ENCODE measurements at regions of chr16 and their contacts with region 1.

Region 1: DNA sequence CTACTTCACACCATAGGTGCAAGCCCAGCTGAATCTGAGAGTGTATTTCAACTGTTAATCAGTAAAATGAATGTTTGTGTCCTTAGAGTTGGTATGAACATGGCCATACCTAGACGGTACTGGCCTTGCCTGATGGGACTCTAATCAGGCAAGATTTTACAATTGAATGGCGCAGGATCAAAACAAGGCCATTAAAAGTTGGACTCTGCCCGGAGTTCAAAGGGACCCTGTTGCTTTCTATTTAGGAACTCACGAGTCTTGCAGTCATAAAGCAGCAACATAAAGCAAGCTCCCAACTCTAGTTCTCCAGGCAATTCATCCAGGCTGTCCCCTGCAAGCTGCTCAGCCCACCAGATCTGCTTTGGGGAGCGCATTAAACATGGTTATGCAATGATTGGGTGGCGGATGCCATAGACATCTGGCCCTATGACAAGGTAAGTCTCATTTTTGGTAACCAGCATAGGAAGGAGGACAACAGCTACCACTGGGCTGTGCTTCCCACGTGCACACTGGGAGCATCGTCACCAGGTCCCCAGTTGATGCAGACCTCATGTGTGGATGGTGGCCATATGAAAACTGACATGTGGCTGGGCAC is 8.8 kb downstream of the TMEM186 start:
- DNase-seq: no peak
- ATAC-seq: no peak
- H3K4me3 Mint-ChIP-seq: no peak overlapping the region
- H3K27ac Mint-ChIP-seq: no peak overlapping the region
- H3K4me1 Mint-ChIP-seq: peaks cover 5% of the 10 kb centered on the region
- H3K27me3 Mint-ChIP-seq: no peaks in the 10 kb centered on the region
- CTCF ChIP-seq: no peak

Region 2: GRCh38 chr16:9123871-9124270 is 335.2 kb after region 1 on chr16:
- CTCF ChIA-PET with region 1: no interaction called
- POLR2A ChIA-PET with region 1: interaction called, 11 read pairs
- intact Hi-C with region 1: no loop called
- DNase-seq: peak; percentile 55
- ATAC-seq: peak; percentile 91
- H3K4me3 Mint-ChIP-seq: peak overlapping the region; percentile 64
- H3K27ac Mint-ChIP-seq: peak overlapping the region; percentile 84
- H3K4me1 Mint-ChIP-seq: peaks cover 72% of the 10 kb centered on the region
- H3K27me3 Mint-ChIP-seq: no peaks in the 10 kb centered on the region
- CTCF ChIP-seq: no peak

Region 3: GRCh38 chr16:9340526-9341256 is 552.0 kb after region 1 on chr16:
- CTCF ChIA-PET with region 1: no interaction called
- POLR2A ChIA-PET with region 1: no interaction called
- intact Hi-C with region 1: no loop called
- DNase-seq: no peak
- ATAC-seq: no peak
- H3K4me3 Mint-ChIP-seq: no peak overlapping the region
- H3K27ac Mint-ChIP-seq: no peak overlapping the region
- H3K4me1 Mint-ChIP-seq: no peaks in the 10 kb centered on the region
- H3K27me3 Mint-ChIP-seq: peaks cover 15% of the 10 kb centered on the region
- CTCF ChIP-seq: no peak